Head of caudate nucleus (tissue), 42 donors: ENCODE measurements at regions of chr9 and their contacts with region 1.

Region 1: DNA sequence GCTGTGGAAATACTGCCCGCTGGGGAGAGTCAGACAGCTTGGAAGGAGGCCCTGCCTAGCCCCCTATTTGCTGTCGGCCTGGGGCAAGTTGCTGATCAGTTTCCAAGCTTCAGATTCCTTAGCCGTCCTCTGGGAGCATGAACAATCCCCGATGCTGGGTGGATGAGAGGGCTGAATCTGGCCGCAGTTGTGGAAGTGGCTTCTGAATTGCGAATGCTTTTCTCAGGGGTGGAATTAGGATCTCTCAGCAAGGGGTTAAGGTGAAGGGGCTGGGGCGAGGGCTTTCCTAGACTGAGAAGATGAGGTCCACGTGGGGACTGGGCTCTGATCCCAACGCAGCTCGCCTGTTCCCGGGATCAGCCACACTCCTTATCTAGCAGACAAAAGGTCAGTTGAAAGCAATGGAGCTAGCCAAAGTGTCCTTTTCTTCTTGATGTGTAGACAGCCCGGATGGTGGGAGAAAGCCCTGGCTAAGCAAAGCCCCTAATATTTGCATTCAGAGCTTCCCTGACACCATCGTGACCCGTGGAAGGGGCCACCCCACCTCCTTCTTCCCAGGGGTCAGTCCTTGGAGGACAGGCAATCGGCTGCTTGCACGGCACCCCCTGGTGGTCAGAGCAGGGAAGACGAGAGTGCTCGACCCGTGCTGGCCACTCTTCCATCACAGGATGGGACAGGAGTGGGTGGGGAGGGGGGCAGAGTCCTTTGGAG is 54.9 kb downstream of the COL15A1 start:
- DNase-seq: peak; percentile 58 to 94 (median 83)

Region 2: GRCh38 chr9:98860871-98861293 is 137.7 kb before region 1 on chr9:
- intact Hi-C with region 1: loop called (anchors 5 kb)
- DNase-seq: peak in 38 of 42 donors; percentile 21 to 81 (median 56)

Region 3: DNA sequence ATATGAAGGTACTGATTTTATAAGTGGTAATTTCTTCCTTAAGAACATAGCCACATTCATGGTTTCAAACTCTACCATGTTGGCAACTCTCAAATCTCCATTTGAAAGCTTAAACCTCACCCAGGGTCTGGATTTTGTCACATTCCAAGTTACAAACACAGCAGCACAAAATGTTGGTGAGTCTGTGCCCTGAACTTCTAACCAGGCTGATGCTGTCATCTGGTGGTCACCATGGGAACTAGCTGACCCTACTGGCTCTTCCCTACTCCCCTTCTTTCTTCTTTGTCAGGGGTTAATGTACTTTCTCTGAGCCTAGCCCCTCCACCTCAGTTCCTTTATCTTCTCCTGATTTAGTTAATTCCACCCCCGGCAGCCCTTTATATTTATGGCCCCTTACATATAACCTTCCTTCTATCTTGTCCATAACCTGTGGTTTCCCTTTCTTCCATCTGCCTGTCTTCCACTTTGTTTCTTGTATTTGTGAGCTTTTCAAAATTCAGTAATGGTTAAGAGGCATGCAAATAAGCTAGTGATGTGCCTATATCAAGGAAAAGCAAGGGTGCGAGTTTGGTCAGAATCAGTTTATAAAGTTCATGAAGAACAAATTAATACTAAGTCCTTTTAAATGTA is 142.2 kb after region 1 on chr9:
- intact Hi-C with region 1: loop called (anchors 5 kb)
- DNase-seq: peak in 39 of 42 donors; percentile 20 to 78 (median 57)